ENCODE measurements at regions of chr15 and their contacts with region 1.

Region 1: DNA sequence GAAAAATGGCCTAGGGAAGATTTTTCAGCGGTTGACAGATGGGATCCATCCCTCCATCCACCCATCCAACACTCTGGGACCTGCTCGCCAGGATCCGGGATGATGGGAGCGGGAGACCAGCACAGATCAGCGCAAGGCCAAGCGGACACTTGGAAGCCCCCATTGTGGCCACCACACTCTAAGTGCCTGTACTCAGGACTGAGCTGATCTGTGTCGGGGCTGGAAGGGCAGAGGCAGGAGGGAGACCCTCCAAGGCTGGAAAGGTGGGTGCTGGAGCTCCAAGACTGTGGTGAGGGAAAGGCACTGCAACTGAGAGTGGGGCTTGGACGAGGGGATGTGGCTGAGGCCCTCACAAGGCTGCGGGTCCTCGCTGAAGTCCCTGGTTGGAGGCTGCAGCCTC is 91.8 kb upstream of the TRPM1 start:
- DNase-seq: no peak
- ATAC-seq: no peak
- H3K4me3 ChIP-seq: no peak overlapping the region
- H3K4me3 Mint-ChIP-seq: no peak overlapping the region
- H3K27ac ChIP-seq: no peak overlapping the region
- H3K27ac Mint-ChIP-seq: no peak overlapping the region
- H3K4me1 ChIP-seq: peaks cover 0 to 3% of the 10 kb centered on the region in 2 experiments
- H3K4me1 Mint-ChIP-seq: peaks cover 0 to 4% (median 2%) of the 10 kb centered on the region in 3 donors
- H3K27me3 ChIP-seq: peaks cover 0 to 3% of the 10 kb centered on the region in 2 experiments
- H3K27me3 Mint-ChIP-seq: no peaks in the 10 kb centered on the region

Region 2: DNA sequence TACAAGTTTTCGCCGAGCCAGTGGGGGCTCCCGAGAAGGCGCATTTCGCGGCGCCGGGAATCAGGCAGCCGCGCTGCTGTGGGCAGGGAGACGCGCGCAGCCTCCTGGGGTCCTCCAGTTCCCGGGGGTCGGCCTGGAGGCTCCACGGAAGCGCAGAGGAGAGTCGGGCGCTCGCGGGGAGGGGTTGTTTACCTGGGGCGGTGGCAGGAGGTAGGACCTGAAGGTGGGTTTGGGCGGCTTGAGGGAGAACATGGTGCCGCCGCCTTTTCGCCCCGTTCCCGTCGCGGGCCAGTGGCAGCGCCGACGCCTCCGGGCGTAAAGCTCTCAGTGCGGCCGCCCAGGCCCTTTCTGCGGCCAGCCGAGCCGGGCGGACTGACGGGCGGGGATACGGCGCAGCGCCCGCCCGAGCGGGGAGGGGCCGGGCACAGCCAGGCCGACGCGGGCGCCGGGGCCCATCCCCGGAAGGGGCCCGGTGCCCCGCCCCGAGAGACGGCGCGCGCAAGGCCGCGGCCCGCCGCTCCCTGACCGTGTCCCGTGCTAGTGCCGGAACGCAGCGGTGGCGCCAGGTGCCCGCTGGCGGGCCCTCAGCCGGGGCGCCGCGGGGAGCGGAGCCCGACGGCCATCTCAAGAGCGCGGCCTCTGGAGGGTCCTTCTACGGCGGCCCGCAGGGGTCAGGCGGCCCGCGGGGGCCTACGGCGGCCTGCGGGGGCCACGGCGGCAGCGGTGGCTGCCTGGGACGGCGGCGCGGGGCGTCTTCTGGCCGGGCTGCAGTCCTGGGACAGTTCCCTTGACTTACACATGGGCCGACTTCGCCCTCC is 201.8 kb before region 1 on chr15 and contains the start of gene MTMR10:
- CTCF ChIA-PET with region 1: no interaction called
- POLR2A ChIA-PET with region 1: interaction called in 1 of 2 experiments, 10 read pairs
- DNase-seq: peak; percentile 36 to 81 (median 62)
- ATAC-seq: peak; percentile 94 to 98 (median 96)
- H3K4me3 ChIP-seq: peak within 1 kb of the TSS; percentile 89 to 91
- H3K4me3 Mint-ChIP-seq: peak within 1 kb of the TSS; percentile 94 to 98 (median 94)
- H3K27ac ChIP-seq: peak within 1 kb of the TSS; percentile 66
- H3K27ac Mint-ChIP-seq: peak within 1 kb of the TSS; percentile 87 to 88
- H3K4me1 ChIP-seq: peaks cover 16 to 24% of the 10 kb centered on the region in 2 experiments
- H3K4me1 Mint-ChIP-seq: peaks cover 26 to 38% (median 32%) of the 10 kb centered on the region in 3 donors
- H3K27me3 ChIP-seq: no peaks in the 10 kb centered on the region
- H3K27me3 Mint-ChIP-seq: no peaks in the 10 kb centered on the region
- total RNA-seq, gene MTMR10: 29.2 to 40.7 (median 33.1) TPM

Region 3: DNA sequence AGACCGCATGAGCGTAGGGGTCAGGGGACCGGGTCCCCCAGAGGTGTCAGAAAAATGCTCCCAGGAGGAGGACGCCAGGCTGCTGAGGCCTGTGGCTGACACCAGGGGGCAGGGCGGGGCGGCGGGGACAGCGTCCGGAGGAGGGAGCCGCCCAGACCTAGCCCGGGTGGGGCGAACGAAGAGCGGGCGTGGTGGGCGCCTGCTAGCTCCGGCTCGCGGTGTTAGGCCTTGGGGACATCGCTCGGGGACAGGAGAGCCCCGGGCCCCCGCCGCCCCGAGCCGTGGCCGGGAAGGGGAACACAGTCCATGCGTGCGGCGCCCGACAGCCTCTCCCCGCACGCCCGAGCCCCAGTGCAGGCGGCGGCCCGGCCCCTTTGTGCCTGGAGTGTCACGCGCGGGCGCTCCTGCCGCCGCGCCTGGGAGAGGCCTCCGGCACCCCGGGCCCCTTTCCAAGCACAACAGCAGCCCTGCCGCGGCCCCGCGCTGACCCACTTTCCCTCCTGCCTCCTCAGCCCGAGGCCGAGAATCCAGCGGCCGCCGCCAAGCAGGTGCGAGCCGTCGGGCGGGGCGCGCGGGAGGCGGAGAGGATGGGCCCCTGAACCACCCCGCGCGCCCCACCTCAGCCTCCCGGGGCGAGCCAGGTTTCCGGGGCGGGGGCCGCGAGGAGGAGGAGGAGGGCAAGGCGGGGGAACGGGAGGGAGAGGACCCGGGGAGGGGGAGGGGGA is 22.4 kb after region 1 on chr15:
- CTCF ChIA-PET with region 1: no interaction called
- POLR2A ChIA-PET with region 1: no interaction called
- DNase-seq: peak; percentile 32 to 86 (median 66)
- ATAC-seq: peak; percentile 75 to 80 (median 78)
- H3K4me3 ChIP-seq: peak overlapping the region; percentile 1 to 34
- H3K4me3 Mint-ChIP-seq: peak overlapping the region; percentile 57 to 84 (median 67)
- H3K27ac ChIP-seq: peak overlapping the region; percentile 68
- H3K27ac Mint-ChIP-seq: peak overlapping the region; percentile 58 to 81
- H3K4me1 ChIP-seq: peaks cover 15 to 28% of the 10 kb centered on the region in 2 experiments
- H3K4me1 Mint-ChIP-seq: peaks cover 23 to 45% (median 37%) of the 10 kb centered on the region in 3 donors
- H3K27me3 ChIP-seq: no peaks in the 10 kb centered on the region
- H3K27me3 Mint-ChIP-seq: no peaks in the 10 kb centered on the region